Common myeloid progenitor, CD34-positive (primary cell): ENCODE measurements at regions of chr9 and their contacts with region 1.

Region 1: DNA sequence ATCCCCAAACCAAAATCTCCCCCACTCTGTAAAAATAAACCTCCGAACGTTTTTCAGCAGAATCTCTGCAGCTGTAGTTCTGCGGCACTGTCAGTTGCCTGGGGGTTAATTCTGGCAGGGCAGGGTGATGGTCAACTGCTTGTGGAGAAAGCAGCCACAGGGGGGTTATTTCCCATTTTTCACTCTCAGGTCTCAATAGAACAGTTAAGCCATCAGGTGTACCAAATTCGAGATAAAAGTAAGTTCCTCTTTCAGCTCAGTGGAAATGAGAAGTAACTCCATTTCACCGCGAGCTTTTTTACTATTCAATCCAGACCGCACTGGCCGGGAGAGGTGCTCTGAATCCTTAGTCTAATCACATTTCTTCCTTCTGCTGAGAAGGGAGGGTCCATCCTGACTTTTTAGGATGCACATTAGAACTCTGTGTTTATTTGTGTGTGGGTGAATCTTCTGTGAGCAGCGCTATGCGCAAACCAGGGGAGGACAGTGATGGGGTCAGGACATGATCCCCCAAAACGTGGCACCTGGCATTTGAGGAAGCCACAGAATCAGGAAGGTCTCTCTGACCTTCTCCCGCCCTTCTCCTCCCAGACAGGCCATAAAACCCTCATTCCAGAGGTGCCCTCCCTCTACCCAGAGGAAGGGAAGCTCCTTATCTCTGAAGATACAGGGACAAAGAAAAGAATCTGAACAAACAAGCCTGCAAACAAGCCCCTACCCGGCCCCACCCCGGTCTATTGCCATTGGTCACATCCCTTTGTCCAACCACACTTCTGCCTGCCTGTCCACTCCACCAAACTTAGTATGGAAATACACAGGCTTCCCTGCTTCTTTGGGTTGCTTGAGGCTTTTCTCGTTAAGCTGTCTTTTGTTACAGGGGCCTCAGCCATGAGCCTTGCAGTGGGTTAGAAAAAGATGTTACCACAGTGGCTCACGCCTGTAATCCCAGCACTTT is 229.0 kb downstream of the ROR2 start:
- DNase-seq: peak; percentile 36 to 88 (median 82)
- H3K4me3 ChIP-seq: peak overlapping the region in 2 of 7 experiments; percentile 4 to 48
- H3K27ac ChIP-seq: no peak overlapping the region
- H3K4me1 ChIP-seq: peaks cover 8 to 31% (median 12%) of the 10 kb centered on the region in 4 experiments
- H3K27me3 ChIP-seq: no peaks in the 10 kb centered on the region

Region 2: DNA sequence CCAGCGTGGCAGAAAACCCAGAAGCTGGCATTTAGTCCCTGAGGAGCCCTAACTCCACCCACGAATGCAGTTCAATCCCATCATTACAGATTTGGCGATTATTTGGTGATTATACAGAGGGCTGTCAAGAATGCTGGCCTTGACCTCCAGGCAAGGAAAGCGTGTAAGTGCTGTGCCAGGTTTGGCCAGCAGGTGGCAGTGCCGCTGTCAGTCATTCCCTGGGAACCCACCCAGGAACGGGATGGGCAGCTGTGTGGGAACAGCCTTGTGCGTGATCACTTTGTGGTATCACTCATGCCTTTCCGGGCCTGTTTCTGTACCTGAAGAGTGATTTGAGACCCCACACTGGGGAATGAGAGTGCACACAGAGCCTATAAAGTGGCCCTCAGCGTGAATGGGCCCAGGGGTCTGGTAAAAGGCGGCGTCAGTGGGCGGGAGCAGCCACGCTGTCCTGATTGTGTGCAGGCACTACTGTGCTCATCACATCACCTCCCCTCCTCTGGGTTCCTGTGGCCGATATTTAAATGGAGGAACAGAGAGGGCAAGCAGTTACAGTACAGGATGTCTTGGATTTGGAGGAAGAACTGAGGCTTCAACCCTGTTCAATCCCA is 13.4 kb after region 1 on chr9:
- CTCF ChIA-PET with region 1: interaction called, 14 read pairs
- POLR2A ChIA-PET with region 1: no interaction called
- DNase-seq: peak; percentile 31 to 40 (median 32)
- H3K4me3 ChIP-seq: no peak overlapping the region
- H3K27ac ChIP-seq: no peak overlapping the region
- H3K4me1 ChIP-seq: no peaks in the 10 kb centered on the region
- H3K27me3 ChIP-seq: peaks cover 0 to 1% (median 0%) of the 10 kb centered on the region in 5 experiments

Region 3: DNA sequence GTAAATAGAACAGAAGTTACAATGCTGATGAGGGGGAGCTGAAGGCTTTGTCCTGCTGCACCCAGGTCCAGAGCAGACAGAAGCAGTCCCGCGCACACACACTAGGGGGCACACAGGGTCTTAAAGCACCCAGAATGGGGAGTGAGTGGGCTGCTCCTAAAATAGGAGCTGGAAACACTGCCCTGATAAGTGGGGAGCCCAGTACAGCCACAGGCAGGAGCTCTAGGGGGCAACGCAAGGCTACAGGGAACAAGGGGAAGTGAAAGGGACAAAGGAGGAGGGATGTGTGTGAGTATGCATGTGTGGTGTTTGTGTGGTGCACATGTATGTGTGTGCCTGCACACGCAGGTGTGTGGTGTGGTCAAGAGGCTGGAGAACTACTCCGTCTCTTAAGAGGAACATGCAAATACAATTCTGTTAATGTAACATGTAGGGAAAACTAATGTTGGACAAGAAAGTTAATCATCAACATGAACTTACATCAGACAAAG is 37.5 kb after region 1 on chr9:
- CTCF ChIA-PET with region 1: no interaction called
- POLR2A ChIA-PET with region 1: no interaction called
- DNase-seq: peak; percentile 40 to 61 (median 47)
- H3K4me3 ChIP-seq: no peak overlapping the region
- H3K27ac ChIP-seq: no peak overlapping the region
- H3K4me1 ChIP-seq: no peaks in the 10 kb centered on the region
- H3K27me3 ChIP-seq: no peaks in the 10 kb centered on the region

Region 4: DNA sequence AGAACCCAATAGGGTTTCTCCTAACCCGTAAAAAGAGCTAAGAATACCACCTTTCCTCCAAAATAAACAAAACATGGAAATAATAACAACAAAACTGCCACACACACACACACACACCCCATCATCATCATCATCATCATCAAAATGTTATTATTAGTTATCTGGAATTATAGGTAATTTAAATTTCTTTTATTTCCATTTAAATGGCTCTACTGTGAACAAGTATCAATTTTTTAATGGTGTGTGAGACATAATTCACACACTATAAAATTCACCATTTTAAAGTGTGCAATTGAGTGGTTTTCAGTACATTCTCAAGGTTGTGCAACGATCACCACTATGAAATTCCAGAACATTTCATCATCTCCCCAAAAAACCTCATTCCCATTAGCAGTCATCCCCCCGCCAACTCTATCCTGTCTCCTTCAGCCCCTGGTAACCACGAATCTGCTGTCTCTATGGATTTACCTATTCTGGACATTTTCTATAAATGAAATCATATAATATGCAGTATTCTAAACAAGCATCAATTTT is 56.3 kb after region 1 on chr9:
- CTCF ChIA-PET with region 1: no interaction called
- POLR2A ChIA-PET with region 1: no interaction called
- DNase-seq: no peak
- H3K4me3 ChIP-seq: no peak overlapping the region
- H3K27ac ChIP-seq: no peak overlapping the region
- H3K4me1 ChIP-seq: peaks cover 6 to 16% (median 9%) of the 10 kb centered on the region in 4 experiments
- H3K27me3 ChIP-seq: no peaks in the 10 kb centered on the region

Region 5: GRCh38 chr9:92206488-92206887 is 485.5 kb after region 1 on chr9:
- CTCF ChIA-PET with region 1: no interaction called
- POLR2A ChIA-PET with region 1: no interaction called
- DNase-seq: no peak
- H3K4me3 ChIP-seq: no peak overlapping the region
- H3K27ac ChIP-seq: no peak overlapping the region
- H3K4me1 ChIP-seq: no peaks in the 10 kb centered on the region
- H3K27me3 ChIP-seq: no peaks in the 10 kb centered on the region